Left ventricle myocardium superior (tissue), 1 donor: ENCODE measurements at regions of chr2 and their contacts with region 1.

Region 1: DNA sequence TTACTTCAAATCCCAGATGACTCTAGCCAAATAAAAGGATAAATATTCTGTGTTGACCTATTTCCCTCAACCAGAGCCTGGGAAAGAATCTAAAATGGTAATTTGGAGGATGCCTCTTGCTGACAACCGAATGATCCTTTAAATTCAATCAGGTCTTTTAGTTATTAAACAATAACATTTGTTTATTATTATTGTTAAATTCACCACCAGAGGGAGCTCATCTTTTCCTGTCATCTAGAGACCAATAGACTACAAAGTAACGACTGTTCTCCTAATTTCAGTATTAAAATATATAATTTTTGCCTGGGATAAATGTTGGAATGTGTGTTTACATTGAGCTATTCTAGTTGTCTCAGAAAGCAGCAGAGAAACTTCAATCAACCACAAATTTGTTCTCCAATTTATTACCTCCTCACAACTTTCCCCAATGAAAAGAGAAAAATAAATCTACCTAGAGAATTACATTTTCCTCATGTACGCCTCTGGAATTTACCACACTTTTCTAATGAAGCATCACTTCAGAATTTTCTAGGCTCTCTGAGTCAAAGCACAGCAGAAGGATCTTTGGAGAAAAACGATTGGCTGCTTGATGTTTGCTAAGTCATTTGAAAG is 142.7 kb downstream of the SCG2 start:
- DNase-seq: no peak
- ATAC-seq: no peak

Region 2: GRCh38 chr2:223601932-223602666 is 142.7 kb after region 1 on chr2 and contains the start of gene SCG2:
- intact Hi-C with region 1: loop called (anchors 10 kb)
- DNase-seq: peak; percentile 72
- ATAC-seq: peak; percentile 91
- total RNA-seq, gene SCG2: not detected

Region 3: GRCh38 chr2:224025874-224026273 is 566.4 kb after region 1 on chr2:
- intact Hi-C with region 1: no loop called
- DNase-seq: no peak
- ATAC-seq: peak; percentile 31